Cardiac septum (tissue), 1 donor: ENCODE measurements at regions of chr19 and their contacts with region 1.

Region 1: GRCh38 chr19:19145684-19146608 is 7.7 kb upstream of the TMEM161A start:
- DNase-seq: peak; percentile 91

Region 2: DNA sequence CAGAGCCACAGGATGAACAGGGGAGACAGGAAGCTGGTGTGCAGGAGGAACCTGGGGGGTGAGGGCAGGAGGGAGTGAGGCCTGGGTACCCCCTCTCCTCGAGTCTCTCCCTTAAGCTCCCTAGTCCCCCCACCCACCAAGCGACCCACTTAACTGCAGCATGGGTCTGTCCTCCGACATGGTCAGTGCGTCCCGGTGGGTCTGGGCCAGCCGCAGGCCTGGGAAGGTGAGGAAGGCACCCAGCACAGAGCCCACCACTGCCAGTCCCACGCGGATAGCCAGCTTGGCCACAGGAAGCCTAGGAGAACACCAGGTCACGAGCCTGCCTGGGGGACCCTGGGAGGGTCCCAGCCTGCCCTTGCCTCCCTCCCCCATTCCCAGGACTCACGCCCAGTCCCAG is 24.6 kb before region 1 on chr19:
- intact Hi-C with region 1: no loop called
- DNase-seq: no peak

Region 3: DNA sequence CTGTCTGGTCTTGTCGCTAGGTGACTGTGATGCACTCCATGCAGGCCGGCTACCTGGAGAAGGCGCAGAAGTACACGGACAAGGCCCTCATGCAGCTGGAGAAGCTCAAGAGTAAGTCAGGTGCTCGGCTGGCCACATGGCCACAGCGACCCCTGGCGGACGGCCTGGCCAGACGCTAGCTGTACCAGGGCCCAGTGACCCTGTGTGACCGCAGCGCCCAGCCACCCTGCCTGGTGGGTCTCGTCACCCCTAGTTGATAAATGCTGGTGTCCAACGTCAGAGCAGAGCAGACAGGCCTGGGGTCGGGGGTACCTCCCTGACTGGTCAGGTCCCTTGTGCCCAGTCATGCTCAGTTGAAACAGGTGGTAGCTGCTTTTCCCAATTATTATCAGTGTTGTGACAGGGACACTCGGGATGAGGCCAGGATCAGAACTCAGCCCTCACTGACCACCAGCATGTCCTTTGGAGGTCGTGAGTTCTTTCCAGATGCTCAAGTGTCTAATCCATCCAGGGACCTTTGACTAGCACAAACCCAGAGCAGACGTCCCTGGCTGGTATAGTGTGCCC is 196.9 kb after region 1 on chr19:
- intact Hi-C with region 1: loop called (anchors 5 kb)
- DNase-seq: peak; percentile 80